Activated CD4-positive, alpha-beta T cell treated with anti-CD3 and anti-CD28 coated beads for 36 hours (primary cell): ENCODE measurements at regions of chr2 and their contacts with region 1.

Region 1: GRCh38 chr2:175326801-175327200 is 145.3 kb upstream of the ATP5MC3 start:
- DNase-seq: no peak
- ATAC-seq: no peak
- H3K4me3 Mint-ChIP-seq: no peak overlapping the region
- H3K27ac Mint-ChIP-seq: no peak overlapping the region
- H3K4me1 Mint-ChIP-seq: no peaks in the 10 kb centered on the region
- H3K27me3 Mint-ChIP-seq: peaks cover 4% of the 10 kb centered on the region

Region 2: DNA sequence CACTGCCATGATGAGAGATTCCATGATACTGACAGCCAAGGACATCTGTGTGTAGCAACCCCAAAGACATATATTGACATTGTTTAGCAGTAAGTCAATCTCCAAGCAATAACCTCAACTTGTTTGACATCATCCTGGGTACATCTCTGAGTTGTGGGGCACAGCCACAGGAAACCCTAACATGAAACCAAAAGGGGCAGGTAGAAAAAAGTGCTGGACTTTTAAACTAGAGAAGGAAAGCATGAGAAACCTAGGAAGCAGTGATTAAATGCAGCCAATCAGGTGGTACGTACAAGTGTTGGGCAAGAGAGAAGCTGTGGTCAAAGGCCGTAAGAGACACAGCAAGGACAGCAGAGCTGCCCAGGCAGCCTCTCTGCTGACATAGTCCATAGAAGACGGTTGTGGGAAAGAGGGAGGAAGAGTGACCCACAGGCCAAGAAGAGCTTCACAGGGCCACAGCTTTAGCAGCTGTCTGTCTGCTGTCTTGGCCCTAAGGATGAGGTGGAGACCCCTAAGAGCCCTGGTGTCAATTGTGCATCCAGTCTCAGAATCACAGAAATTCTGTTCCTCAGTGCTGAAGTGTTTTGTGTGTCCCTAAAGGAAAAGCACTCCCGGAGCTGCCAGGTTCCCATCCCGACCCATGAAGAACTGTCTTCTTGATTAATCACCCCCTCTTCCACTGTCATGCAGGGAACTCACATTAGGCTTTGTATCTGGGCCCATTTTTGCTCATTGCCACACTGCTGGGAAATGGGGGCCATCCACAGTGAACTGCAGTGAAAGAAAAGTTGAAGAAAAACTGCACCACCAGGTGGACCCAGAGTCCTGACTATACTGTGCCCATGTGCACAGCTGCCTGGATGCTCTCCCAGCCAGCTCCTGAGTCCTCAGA is 296.2 kb before region 1 on chr2:
- CTCF ChIA-PET with region 1: interaction called, 3 read pairs
- POLR2A ChIA-PET with region 1: no interaction called
- intact Hi-C with region 1: loop called in 1 of 2 experiments (anchors 1 kb)
- DNase-seq: peak; percentile 50
- ATAC-seq: no peak
- H3K4me3 Mint-ChIP-seq: no peak overlapping the region
- H3K27ac Mint-ChIP-seq: no peak overlapping the region
- H3K4me1 Mint-ChIP-seq: no peaks in the 10 kb centered on the region
- H3K27me3 Mint-ChIP-seq: no peaks in the 10 kb centered on the region